ENCODE measurements at regions of chr1 and their contacts with region 1.

Region 1: DNA sequence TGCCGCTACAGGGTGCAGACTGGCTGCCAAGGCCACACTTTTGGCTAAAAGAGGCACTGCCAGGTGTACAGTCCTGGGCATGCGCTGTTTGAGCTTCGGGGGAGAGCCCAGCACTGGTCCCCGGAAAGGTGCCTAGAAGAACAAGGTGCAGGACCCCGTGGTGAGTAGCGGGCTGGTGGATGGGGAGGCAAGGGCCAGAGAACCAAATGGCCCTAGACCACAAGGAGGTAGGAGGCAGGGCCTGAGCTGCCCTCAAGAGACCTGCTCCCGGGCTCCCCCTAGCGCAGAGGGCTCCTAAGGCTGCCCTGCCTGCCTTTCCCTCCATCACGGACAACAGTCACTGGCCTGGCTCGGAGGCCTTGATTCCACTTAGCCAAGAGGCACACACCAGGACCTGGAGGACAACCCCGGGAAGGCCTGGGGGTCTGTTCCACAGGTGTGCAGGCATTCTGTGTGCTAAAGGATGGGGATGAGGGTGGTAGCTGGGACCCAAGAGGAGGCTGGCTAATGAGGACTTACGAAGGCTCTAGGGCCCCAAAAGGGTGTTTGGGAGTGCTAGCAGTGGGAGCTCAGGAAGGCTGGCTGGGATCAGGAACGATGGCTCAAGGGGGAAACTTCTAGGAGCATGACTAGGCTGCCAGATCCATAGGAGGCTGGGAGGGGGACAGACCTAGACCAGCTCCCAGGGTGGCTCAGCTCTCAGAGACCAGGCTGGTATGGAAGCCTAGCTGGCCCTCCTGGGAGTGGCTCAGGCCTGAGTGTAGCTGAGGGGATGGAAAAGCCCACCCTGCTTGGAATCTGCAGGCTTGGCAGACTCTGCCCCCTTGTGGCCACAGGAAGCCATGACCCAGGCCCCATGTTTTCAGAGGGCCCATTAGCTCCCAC is 742 bp downstream of the ARTN start:
- DNase-seq: no peak
- H3K4me3 ChIP-seq: no peak overlapping the region
- H3K27me3 ChIP-seq: no peaks in the 10 kb centered on the region
- CTCF ChIP-seq: peak; percentile 96

Region 2: GRCh38 chr1:43763497-43763973 is 170.8 kb before region 1 on chr1:
- CTCF ChIA-PET with region 1: interaction called, 365 read pairs
- POLR2A ChIA-PET with region 1: no interaction called
- DNase-seq: peak; percentile 58
- H3K4me3 ChIP-seq: no peak overlapping the region
- H3K27me3 ChIP-seq: no peaks in the 10 kb centered on the region
- CTCF ChIP-seq: peak; percentile 84

Region 3: GRCh38 chr1:43796111-43796581 is 138.2 kb before region 1 on chr1:
- CTCF ChIA-PET with region 1: interaction called, 14 read pairs
- POLR2A ChIA-PET with region 1: no interaction called
- DNase-seq: no peak
- H3K4me3 ChIP-seq: no peak overlapping the region
- H3K27me3 ChIP-seq: no peaks in the 10 kb centered on the region
- CTCF ChIP-seq: no peak

Region 4: DNA sequence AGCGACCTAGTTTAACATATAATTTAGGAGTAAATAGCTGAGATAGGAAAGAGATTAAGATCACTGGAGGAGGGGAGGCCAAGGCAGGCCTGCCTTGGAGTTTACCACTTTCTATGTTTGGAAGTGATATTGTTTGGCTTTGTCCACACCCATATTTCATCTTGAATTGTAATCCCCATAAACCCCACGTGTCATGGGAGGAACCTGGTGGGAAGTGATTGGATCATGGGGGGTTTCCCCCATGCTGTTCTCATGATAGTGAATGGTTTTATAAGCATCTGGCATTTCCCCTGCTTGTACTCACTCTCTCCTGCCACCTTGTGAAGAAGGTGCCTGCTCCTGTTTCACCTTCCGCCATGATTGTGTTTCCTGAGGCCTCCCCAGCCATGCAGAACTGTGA is 59.0 kb before region 1 on chr1:
- CTCF ChIA-PET with region 1: interaction called, 10 read pairs
- POLR2A ChIA-PET with region 1: no interaction called
- DNase-seq: no peak
- H3K4me3 ChIP-seq: no peak overlapping the region
- H3K27me3 ChIP-seq: no peaks in the 10 kb centered on the region
- CTCF ChIP-seq: no peak

Region 5: DNA sequence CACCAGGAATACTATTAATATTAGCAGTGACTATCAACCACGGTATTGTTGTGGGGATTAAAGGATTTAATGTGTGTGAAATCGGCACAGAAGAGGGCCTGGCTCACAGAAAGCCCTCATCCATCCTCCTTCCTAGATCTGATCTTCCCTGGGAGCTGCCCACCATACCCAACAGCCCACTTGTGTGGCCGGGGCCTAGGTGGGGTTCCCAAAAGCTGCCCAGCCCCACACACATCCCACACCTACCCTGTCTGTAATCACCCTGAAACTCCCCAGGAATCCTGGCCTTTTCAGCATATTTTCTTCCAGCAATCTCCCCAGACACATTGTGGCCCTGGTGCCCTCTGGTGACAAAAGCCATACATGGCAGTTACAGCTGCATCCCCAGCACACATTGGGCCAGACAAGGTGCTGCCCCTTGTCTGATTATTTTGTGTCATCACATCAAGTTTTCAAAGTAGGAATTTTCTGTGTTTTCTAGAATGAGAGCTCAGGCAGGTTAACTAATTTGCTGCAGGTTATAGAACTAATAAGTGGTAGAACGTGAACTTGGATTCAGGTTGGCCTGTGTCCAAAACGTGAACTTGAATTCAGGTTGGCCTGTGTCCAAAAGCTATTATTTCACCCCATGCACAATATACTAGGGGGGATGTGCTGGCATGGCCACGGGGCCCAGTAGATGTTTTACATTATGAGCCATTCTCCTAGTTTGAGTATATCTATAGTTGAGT is 102.2 kb after region 1 on chr1:
- CTCF ChIA-PET with region 1: interaction called, 13 read pairs
- POLR2A ChIA-PET with region 1: no interaction called
- DNase-seq: no peak
- H3K4me3 ChIP-seq: no peak overlapping the region
- H3K27me3 ChIP-seq: no peaks in the 10 kb centered on the region
- CTCF ChIP-seq: peak; percentile 80

Region 6: DNA sequence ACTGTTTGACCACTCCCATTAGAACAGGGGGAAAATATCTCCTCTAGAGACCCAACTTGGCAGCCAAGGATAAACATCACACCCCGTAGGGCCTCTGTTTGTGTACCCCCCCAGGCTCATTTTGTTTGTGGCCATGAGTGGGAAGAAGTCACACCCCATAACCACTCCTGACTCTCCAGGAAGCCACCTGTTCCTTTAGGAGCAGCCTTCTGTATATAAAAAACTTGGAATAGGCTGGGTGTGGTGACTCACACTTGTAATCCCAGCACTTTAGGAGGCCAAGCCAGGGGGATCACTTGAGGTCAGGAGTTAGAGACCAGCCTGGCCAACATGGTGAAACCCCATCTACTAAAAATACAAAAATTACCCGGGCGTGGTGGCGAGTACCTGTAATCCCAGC is 125.6 kb after region 1 on chr1:
- CTCF ChIA-PET with region 1: no interaction called
- POLR2A ChIA-PET with region 1: no interaction called
- DNase-seq: no peak
- H3K4me3 ChIP-seq: no peak overlapping the region
- H3K27me3 ChIP-seq: no peaks in the 10 kb centered on the region
- CTCF ChIP-seq: no peak

Region 7: DNA sequence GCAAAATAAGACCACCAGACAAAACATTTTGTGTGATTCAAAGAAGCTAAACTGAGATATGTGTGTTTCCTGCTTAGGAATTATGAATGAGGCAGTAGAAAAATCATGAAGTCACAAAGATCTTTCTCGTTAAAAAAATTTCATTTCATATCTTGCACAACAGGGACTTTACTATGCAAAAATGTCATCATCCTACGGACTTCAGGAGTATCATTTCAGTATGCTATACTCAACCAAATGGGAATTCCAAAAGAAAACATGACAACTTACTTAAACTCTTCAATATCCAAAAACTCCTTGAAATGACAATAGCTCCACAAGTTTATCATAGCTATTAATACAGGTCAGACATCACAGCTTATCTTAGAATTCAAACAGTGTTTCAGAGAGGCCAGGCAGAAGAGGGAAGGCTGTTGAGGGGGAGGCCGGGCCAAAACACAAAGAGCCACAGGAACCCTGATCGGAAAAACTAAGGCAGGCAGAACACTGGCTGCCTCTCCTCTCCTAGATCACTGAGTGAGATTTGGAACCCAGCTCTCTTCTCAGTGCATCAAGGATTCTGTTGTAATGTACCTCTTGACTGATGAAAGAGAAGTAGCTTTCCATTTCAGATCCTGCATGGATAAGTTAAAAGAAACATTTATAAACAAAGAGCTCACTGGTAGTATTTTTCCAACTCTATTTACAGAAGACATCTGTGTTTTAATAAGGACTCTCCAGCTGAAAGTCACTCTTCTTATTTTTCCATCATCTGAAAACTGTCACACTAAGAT is 1489.7 kb after region 1 on chr1:
- CTCF ChIA-PET with region 1: no interaction called
- POLR2A ChIA-PET with region 1: no interaction called
- DNase-seq: no peak
- H3K4me3 ChIP-seq: no peak overlapping the region
- H3K27me3 ChIP-seq: no peaks in the 10 kb centered on the region
- CTCF ChIP-seq: no peak

Measured in BJ (cell line).